ENCODE measurements at regions of chr2 and their contacts with region 1.

Region 1: DNA sequence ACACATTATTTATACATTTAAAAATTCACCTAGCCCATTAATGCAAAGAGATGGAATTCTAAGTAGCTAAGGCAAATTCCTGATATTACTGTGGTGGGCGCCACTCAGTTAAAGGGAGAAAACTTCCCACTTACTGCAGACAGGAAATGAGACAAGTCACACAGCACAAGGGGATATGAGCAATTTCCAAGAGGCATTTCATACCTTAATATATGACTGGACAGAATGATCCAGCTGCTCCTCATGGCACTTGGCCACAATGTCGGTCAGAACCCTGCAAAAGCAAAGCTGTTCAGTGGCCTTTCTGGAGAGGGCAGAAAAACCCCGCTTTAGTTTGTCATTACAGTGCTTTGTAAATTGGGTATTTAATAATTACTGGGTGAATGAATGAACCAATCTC is 121.4 kb upstream of the CCDC195 start:
- H3K4me3 Mint-ChIP-seq: no peak overlapping the region
- H3K27ac Mint-ChIP-seq: no peak overlapping the region
- H3K4me1 Mint-ChIP-seq: no peaks in the 10 kb centered on the region
- H3K27me3 Mint-ChIP-seq: no peaks in the 10 kb centered on the region

Region 2: GRCh38 chr2:224802407-224802806 is 35.2 kb before region 1 on chr2:
- intact Hi-C with region 1: loop called (anchors 5 kb)
- H3K4me3 Mint-ChIP-seq: no peak overlapping the region
- H3K27ac Mint-ChIP-seq: no peak overlapping the region
- H3K4me1 Mint-ChIP-seq: no peaks in the 10 kb centered on the region
- H3K27me3 Mint-ChIP-seq: no peaks in the 10 kb centered on the region

Measured in dendritic cell treated with granulocyte-macrophage colony-stimulating factor and Interleukin-4, amounts not matched to agents 40 ng/mL and 50 ng/mL, for 4 days (primary cell).